ENCODE measurements at regions of chr3 and their contacts with region 1.

Region 1: GRCh38 chr3:42229942-42230688 is 35.9 kb downstream of the CCK start:
- DNase-seq: peak; percentile 75
- ATAC-seq: peak; percentile 73
- H3K4me3 ChIP-seq: peak overlapping the region; percentile 55; the same call in 1 of the 2 replicates
- H3K27ac ChIP-seq: no peak overlapping the region
- H3K4me1 ChIP-seq: 0 out of 2 replicates have a peak, but pooled peaks cover 5% of the 10 kb centered on the region
- H3K27me3 ChIP-seq: peaks cover 5% of the 10 kb centered on the region; the same call in 1 of the 2 replicates
- CTCF ChIP-seq: peak; percentile 90

Region 2: GRCh38 chr3:42118762-42119361 is 111.3 kb before region 1 on chr3:
- CTCF ChIA-PET with region 1: interaction called, 16 read pairs
- POLR2A ChIA-PET with region 1: no interaction called
- intact Hi-C with region 1: loop called (anchors 1 kb)
- DNase-seq: peak; percentile 85
- ATAC-seq: peak; percentile 79
- H3K4me3 ChIP-seq: no peak overlapping the region
- H3K27ac ChIP-seq: 0 out of 2 replicates have a peak overlapping the region, but pooled peaks have one; percentile 3
- H3K4me1 ChIP-seq: peaks cover 33% of the 10 kb centered on the region
- H3K27me3 ChIP-seq: no peaks in the 10 kb centered on the region
- CTCF ChIP-seq: peak; percentile 86

Region 3: DNA sequence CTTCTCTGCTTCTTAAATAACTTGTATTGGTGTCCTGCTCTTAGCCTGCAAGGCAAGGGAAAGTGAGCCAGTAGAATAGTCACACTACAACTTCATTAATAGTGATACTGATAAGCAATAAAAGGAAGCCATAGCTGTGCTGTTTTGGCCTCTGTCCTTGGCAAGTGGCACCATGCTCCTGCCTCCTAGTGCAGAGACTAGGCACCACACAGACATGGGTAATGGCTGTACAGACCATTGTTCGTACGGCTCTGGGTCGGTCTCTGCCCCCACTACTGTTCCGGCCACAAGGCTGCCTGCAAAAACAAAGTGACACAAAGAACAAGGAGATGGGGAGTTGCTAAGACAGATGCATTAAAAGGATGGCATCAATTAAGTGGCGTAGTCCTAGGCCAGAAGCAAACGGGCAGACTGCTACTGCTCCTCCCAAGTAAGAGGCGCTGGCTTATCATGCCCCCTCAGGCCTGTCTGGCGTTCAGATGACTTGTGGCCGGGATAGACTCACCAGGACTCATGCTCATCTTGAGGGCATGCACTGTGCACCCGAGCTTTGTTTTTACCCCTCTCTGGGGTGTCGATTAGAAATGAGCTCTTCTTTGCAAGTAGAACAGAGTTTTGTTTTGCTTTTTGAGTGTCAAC is 63.3 kb before region 1 on chr3:
- CTCF ChIA-PET with region 1: no interaction called
- POLR2A ChIA-PET with region 1: no interaction called
- intact Hi-C with region 1: no loop called
- DNase-seq: no peak
- ATAC-seq: no peak
- H3K4me3 ChIP-seq: no peak overlapping the region
- H3K27ac ChIP-seq: no peak overlapping the region
- H3K4me1 ChIP-seq: peaks cover 38% of the 10 kb centered on the region
- H3K27me3 ChIP-seq: no peaks in the 10 kb centered on the region
- CTCF ChIP-seq: no peak

Region 4: GRCh38 chr3:42443819-42444436 is 213.8 kb after region 1 on chr3:
- CTCF ChIA-PET with region 1: interaction called, 32 read pairs
- POLR2A ChIA-PET with region 1: no interaction called
- intact Hi-C with region 1: loop called (anchors 1 kb)
- DNase-seq: peak; percentile 93
- ATAC-seq: peak; percentile 100
- H3K4me3 ChIP-seq: no peak overlapping the region
- H3K27ac ChIP-seq: no peak overlapping the region
- H3K4me1 ChIP-seq: no peaks in the 10 kb centered on the region
- H3K27me3 ChIP-seq: peaks cover 19% of the 10 kb centered on the region
- CTCF ChIP-seq: peak; percentile 98

Region 5: DNA sequence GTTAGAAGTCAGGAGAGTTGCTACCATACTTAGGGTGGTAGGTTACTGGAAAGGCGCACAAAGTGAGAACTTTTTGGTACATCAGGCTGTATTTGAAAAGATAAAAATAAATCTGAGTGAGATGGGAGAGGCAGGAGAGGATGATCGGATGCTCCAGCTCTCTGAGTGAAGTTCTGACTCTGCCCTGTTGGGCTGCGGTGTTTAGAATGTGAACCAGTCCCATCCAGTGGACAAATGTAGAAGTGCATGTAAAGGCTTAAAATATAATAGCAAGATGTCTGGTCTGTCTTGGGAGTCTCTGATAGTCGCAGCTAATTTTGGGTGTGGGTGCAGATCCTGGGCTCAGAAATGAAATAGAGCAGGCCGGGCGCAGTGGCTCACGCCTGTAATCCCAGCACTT is 609.5 kb after region 1 on chr3:
- CTCF ChIA-PET with region 1: interaction called, 4 read pairs
- POLR2A ChIA-PET with region 1: no interaction called
- intact Hi-C with region 1: loop called (anchors 2 kb)
- DNase-seq: peak; percentile 87
- ATAC-seq: peak; percentile 99
- H3K4me3 ChIP-seq: peak overlapping the region; percentile 57
- H3K27ac ChIP-seq: no peak overlapping the region
- H3K4me1 ChIP-seq: peaks cover 6% of the 10 kb centered on the region; the same call in 1 of the 2 replicates
- H3K27me3 ChIP-seq: no peaks in the 10 kb centered on the region
- CTCF ChIP-seq: peak; percentile 75